ENCODE measurements at regions of chr3 and their contacts with region 1.

Region 1: GRCh38 chr3:43180027-43180426 is 74.1 kb upstream of the POMGNT2 start:
- DNase-seq: peak; percentile 96
- H3K4me3 ChIP-seq: no peak overlapping the region
- H3K27ac ChIP-seq: peak overlapping the region; percentile 89
- H3K4me1 ChIP-seq: peaks cover 47% of the 10 kb centered on the region
- H3K27me3 ChIP-seq: no peaks in the 10 kb centered on the region
- CTCF ChIP-seq: no peak
- POLR2A ChIP-seq: no peak

Region 2: DNA sequence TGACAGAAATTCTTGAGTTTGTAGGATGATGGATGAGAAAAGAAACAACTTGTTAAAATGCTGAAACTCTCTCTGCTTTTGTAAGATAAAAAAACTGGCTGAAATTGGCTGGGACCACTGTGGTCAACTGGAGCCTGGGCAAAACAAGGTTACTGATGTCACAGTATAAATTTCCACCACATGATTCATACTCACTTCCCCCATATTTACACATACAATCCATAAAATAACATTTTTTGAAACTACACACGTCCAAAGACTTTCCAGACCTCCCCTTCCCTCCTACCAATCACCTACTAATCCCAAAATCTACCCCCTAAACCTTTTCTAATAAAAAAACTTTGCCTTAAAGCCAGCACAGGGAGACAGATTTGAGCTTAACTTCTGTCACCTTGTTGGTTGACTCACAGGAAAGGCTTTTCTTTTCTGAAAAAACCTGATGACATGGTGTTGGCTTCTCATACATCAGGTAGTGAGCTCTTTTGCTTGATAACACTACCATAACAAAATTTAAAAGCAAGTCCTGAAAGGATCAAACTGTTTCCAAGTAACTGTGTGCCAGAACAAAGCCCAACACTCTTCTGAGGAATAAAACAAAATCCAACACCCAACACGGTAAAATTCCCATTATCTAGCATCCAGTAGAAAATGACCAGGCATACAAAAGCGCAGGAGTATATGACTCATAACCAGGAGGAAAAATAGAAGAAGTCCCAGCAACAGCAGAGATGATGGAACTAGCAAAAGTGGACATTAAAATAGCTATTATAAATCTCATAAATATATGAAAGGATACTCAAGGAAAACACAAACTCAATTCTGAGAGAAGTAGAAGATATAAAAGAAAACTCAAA is 19.0 kb after region 1 on chr3:
- CTCF ChIA-PET with region 1: interaction called, 3 read pairs
- POLR2A ChIA-PET with region 1: no interaction called
- dilution Hi-C with region 1: no loop called
- intact Hi-C with region 1: loop called (anchors 2 kb)
- DNase-seq: peak; percentile 61
- H3K4me3 ChIP-seq: no peak overlapping the region
- H3K27ac ChIP-seq: peak overlapping the region; percentile 77
- H3K4me1 ChIP-seq: peaks cover 23% of the 10 kb centered on the region
- H3K27me3 ChIP-seq: no peaks in the 10 kb centered on the region
- CTCF ChIP-seq: no peak
- POLR2A ChIP-seq: no peak

Region 3: GRCh38 chr3:43286115-43286840 is 106.3 kb after region 1 on chr3 and contains the start of gene SNRK:
- CTCF ChIA-PET with region 1: interaction called, 12 read pairs
- POLR2A ChIA-PET with region 1: interaction called, 4 read pairs
- dilution Hi-C with region 1: no loop called
- intact Hi-C with region 1: loop called (anchors 1 kb)
- DNase-seq: peak; percentile 99
- H3K4me3 ChIP-seq: peak within 1 kb of the TSS; percentile 60 to 100 (median 99)
- H3K27ac ChIP-seq: peak within 1 kb of the TSS; percentile 100
- H3K4me1 ChIP-seq: peaks cover 43% of the 10 kb centered on the region
- H3K27me3 ChIP-seq: no peaks in the 10 kb centered on the region
- CTCF ChIP-seq: peak; percentile 32 to 42
- POLR2A ChIP-seq: peak; percentile 87
- total RNA-seq, gene SNRK: 99.9 and 108 TPM in 2 replicates

Region 4: GRCh38 chr3:43497905-43498365 is 317.9 kb after region 1 on chr3:
- CTCF ChIA-PET with region 1: interaction called, 4 read pairs
- POLR2A ChIA-PET with region 1: no interaction called
- dilution Hi-C with region 1: no loop called
- intact Hi-C with region 1: loop called (anchors 5 kb)
- DNase-seq: peak; percentile 51
- H3K4me3 ChIP-seq: no peak overlapping the region
- H3K27ac ChIP-seq: peak overlapping the region; percentile 91
- H3K4me1 ChIP-seq: peaks cover 56% of the 10 kb centered on the region
- H3K27me3 ChIP-seq: no peaks in the 10 kb centered on the region
- CTCF ChIP-seq: no peak
- POLR2A ChIP-seq: no peak